PC-9 (cell line): ENCODE measurements at regions of chr6 and their contacts with region 1.

Region 1: GRCh38 chr6:154942775-154943174 is 52.3 kb upstream of the TIAM2 start:
- DNase-seq: no peak
- H3K4me3 ChIP-seq: no peak overlapping the region
- H3K27ac ChIP-seq: no peak overlapping the region
- H3K4me1 ChIP-seq: no peaks in the 10 kb centered on the region
- H3K27me3 ChIP-seq: no peaks in the 10 kb centered on the region
- CTCF ChIP-seq: no peak

Region 2: DNA sequence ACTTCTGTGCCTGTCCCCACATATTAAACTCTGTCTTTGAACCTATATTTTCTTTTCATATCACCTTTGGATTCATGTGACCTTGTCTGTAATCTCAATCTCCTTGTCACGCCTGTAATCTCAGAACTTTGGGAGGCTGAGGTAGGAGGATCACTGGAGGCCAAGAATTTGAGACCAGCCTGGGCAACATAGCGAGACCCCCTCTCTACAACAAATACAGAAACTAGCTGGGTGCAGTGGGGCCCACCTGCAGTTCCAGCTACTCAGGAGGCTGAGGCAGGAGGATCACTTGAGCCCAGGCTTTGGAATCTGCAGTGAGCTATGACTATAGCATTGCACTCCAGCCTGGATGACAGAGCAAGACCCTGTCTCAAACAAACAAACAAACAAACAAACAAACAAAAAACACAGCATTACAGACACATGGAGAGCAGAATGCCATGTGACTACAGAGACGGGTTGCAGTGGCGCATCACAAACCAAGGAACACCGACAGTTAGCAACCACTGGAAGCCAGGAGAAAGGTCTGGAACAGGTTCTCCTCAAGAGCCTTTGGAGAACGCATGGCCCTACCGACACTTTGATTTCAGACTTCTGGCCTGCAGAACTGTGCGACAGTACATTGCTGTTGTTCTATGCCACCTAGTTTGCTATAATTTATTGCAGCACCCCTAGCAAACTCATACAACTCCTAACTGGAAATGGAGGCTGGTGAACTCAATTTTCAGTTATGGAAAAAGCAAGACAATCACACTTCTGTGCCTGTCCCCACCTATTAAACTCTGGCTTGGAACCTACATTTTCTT is 37.7 kb after region 1 on chr6:
- CTCF ChIA-PET with region 1: no interaction called
- POLR2A ChIA-PET with region 1: no interaction called
- intact Hi-C with region 1: loop called (anchors 1 kb)
- DNase-seq: no peak
- H3K4me3 ChIP-seq: no peak overlapping the region
- H3K27ac ChIP-seq: no peak overlapping the region
- H3K4me1 ChIP-seq: no peaks in the 10 kb centered on the region
- H3K27me3 ChIP-seq: no peaks in the 10 kb centered on the region
- CTCF ChIP-seq: no peak